CD4-positive, alpha-beta T cell (primary cell): ENCODE measurements at regions of chr13 and their contacts with region 1.

Region 1: GRCh38 chr13:25001476-25002206 is 94.3 kb upstream of the PABPC3 start:
- DNase-seq: no peak
- ATAC-seq: no peak
- H3K4me3 ChIP-seq: no peak overlapping the region
- H3K4me3 Mint-ChIP-seq: no peak overlapping the region
- H3K27ac ChIP-seq: no peak overlapping the region
- H3K27ac Mint-ChIP-seq: no peak overlapping the region
- H3K4me1 ChIP-seq: no peaks in the 10 kb centered on the region
- H3K4me1 Mint-ChIP-seq: no peaks in the 10 kb centered on the region
- H3K27me3 ChIP-seq: peaks cover 6 to 24% of the 10 kb centered on the region in 2 experiments
- H3K27me3 Mint-ChIP-seq: peaks cover 66% of the 10 kb centered on the region
- CTCF ChIP-seq: no peak

Region 2: DNA sequence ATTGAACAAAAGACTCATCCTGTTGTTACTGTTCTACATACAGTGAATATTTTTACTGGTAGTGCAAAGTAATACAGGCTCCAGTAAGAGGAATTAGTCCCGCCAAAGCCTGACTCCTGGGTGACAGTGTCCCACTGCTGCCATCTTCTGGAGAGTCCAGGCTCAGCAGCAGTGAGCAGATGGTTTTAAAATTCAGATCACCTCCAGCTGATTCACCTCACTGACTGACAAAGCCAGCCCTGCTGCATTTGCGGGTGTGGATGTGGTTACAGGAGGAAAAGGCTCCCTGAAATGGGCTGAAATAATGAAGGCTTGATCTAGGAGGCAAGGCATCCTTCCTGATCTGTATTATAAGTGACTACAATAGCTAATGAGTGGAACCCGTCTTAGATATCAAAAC is 112.6 kb after region 1 on chr13:
- CTCF ChIA-PET with region 1: no interaction called
- POLR2A ChIA-PET with region 1: no interaction called
- intact Hi-C with region 1: loop called in 1 of 2 experiments (anchors 10 kb)
- DNase-seq: peak in 13 of 14 experiments; percentile 10 to 61 (median 39)
- ATAC-seq: peak; percentile 69
- H3K4me3 ChIP-seq: no peak overlapping the region
- H3K4me3 Mint-ChIP-seq: no peak overlapping the region
- H3K27ac ChIP-seq: no peak overlapping the region
- H3K27ac Mint-ChIP-seq: no peak overlapping the region
- H3K4me1 ChIP-seq: peaks cover 3% of the 10 kb centered on the region
- H3K4me1 Mint-ChIP-seq: no peaks in the 10 kb centered on the region
- H3K27me3 ChIP-seq: peaks cover 3 to 7% of the 10 kb centered on the region in 2 experiments
- H3K27me3 Mint-ChIP-seq: peaks cover 49% of the 10 kb centered on the region
- CTCF ChIP-seq: peak; percentile 69

Region 3: GRCh38 chr13:26074706-26075105 is 1073.1 kb after region 1 on chr13:
- CTCF ChIA-PET with region 1: no interaction called
- POLR2A ChIA-PET with region 1: no interaction called
- intact Hi-C with region 1: loop called (anchors 5 to 10 kb)
- DNase-seq: no peak
- ATAC-seq: no peak
- H3K4me3 ChIP-seq: no peak overlapping the region
- H3K4me3 Mint-ChIP-seq: no peak overlapping the region
- H3K27ac ChIP-seq: no peak overlapping the region
- H3K27ac Mint-ChIP-seq: no peak overlapping the region
- H3K4me1 ChIP-seq: no peaks in the 10 kb centered on the region
- H3K4me1 Mint-ChIP-seq: no peaks in the 10 kb centered on the region
- H3K27me3 ChIP-seq: peaks cover 5 to 9% of the 10 kb centered on the region in 2 experiments
- H3K27me3 Mint-ChIP-seq: peaks cover 67% of the 10 kb centered on the region
- CTCF ChIP-seq: no peak